Activated CD4-positive, alpha-beta T cell treated with anti-CD3 and anti-CD28 coated beads for 36 hours (primary cell): ENCODE measurements at regions of chr19 and their contacts with region 1.

Region 1: DNA sequence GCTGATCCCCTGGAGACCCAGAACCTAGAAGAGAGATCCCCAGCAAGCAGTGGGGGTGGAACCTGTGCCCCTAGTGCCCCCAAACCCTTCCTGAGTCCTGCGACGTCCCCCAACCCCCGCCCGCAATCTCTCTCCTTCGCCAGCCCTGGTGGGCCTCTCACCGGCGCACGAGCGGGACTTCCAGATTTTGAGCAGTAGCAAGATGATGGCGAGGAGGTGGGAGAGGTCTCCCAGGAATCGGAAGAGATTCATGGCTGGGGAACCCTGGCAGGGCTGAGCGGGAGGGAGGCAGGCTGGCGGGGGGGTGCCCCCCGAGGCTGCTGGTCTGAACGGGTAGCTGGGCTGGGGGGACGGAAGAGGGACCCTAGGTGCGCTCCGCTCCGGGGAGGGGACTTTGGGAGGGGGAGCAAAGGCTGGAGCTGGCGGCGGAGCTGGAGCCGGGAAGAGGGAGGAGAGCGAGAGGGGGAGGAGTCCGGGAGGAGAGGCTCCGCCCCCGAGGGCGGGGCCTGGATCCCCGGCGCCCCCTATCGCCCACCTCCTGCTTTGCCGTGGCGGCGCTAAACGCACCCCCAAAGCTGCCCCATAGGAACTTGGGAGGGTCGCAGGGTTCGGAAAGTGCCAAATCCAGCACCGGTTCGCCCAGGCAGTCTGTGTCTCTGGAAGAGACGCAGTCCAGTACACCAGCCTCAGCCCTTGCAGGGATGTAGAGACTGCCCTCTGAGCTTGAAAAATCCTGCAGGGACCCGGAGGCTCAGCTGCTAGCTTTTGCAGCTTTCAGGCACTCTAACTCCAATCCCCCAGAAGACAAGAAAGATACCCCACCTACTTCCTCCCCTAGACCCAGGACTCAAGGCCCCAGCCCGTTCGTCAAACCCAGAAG is at the start of gene KDELR1:
- DNase-seq: peak; percentile 85
- ATAC-seq: peak; percentile 82
- H3K4me3 Mint-ChIP-seq: peak within 1 kb of the TSS; percentile 92
- H3K27ac Mint-ChIP-seq: peak within 1 kb of the TSS; percentile 93
- H3K4me1 Mint-ChIP-seq: peaks cover 17% of the 10 kb centered on the region
- H3K27me3 Mint-ChIP-seq: peaks cover 19% of the 10 kb centered on the region
- total RNA-seq, gene KDELR1: 69.5 to 78.8 TPM

Region 2: DNA sequence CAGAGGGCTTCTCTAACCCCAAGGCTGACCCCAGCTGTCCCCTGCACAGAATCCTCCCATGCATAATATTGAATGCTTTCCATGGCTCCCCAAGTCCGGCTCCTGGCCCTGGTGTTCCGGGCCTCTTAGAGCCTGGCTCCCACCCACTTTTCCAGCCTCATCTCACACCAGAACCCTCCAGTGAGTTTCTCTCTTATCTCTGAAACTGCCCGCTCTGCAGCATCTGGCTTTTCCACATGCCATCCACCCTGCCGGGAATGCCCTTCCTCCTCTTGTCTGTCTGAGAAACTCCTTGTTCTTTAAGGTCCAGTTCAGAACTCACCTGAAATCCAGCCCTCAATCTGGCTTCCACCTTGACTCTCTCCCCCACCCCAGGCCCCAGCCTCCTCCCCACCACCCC is 20.4 kb before region 1 on chr19:
- CTCF ChIA-PET with region 1: interaction called, 4 read pairs
- POLR2A ChIA-PET with region 1: interaction called, 11 read pairs
- intact Hi-C with region 1: no loop called
- DNase-seq: no peak
- ATAC-seq: no peak
- H3K4me3 Mint-ChIP-seq: no peak overlapping the region
- H3K27ac Mint-ChIP-seq: no peak overlapping the region
- H3K4me1 Mint-ChIP-seq: no peaks in the 10 kb centered on the region
- H3K27me3 Mint-ChIP-seq: no peaks in the 10 kb centered on the region

Region 3: GRCh38 chr19:48618916-48619691 is 227.8 kb after region 1 on chr19 and contains the starts of genes RPL18 and SPHK2:
- CTCF ChIA-PET with region 1: no interaction called
- POLR2A ChIA-PET with region 1: no interaction called
- intact Hi-C with region 1: loop called in 1 of 2 experiments (anchors 1 kb)
- DNase-seq: peak; percentile 97
- ATAC-seq: peak; percentile 82
- H3K4me3 Mint-ChIP-seq: peak within 1 kb of the TSS; percentile 94
- H3K27ac Mint-ChIP-seq: peak within 1 kb of the TSS; percentile 97
- H3K4me1 Mint-ChIP-seq: peaks cover 48% of the 10 kb centered on the region
- H3K27me3 Mint-ChIP-seq: no peaks in the 10 kb centered on the region
- total RNA-seq, gene RPL18: 2,026 to 2,191 TPM
- total RNA-seq, gene SPHK2: 27.0 TPM